Activated CD4-positive, alpha-beta memory T cell treated with anti-CD3 and anti-CD28 coated beads, Interleukin-2, amount 10 ng/mL, durations not matched to agents 7 days and 5 days (primary cell): ENCODE measurements at regions of chr4 and their contacts with region 1.

Region 1: DNA sequence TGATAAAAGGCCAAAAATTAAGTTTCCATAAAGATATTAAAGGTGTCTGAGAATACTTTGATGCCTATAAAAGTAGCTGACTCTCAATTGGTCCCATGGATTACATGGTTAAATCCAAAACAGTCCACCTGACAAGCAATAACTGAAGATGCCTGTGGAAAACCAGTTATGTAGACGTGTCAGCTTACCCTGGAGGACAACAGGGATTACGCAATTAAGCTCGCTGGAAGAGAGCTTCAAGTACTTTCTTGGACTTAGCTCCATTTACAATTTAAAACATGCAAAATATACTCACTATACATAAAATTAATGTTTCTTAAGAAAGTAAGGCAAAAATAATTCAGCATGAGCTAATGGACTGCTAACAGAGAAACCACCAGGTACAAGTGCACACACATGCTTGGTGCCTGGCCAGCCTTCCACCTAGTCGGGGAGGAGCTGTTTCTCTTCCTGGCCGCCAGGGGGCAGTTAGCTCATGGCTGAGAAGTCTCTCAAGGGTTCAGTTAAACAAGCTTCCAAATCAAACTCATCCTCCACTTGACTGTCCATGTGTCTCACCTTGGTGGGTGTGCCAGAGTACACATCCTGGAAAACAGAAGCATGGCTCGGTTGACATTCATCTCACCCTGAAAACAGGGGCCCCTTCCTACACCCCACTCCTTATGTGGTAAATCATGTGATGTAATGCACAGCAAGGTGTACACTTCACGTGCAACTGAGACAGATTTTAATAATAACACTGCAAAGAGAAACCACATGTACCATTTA is 9.2 kb upstream of the FAM53A start:
- DNase-seq: peak; percentile 80
- H3K4me3 Mint-ChIP-seq: no peak overlapping the region
- H3K27ac Mint-ChIP-seq: peak overlapping the region; percentile 73
- H3K4me1 Mint-ChIP-seq: peaks cover 7% of the 10 kb centered on the region
- H3K27me3 Mint-ChIP-seq: no peaks in the 10 kb centered on the region

Region 2: DNA sequence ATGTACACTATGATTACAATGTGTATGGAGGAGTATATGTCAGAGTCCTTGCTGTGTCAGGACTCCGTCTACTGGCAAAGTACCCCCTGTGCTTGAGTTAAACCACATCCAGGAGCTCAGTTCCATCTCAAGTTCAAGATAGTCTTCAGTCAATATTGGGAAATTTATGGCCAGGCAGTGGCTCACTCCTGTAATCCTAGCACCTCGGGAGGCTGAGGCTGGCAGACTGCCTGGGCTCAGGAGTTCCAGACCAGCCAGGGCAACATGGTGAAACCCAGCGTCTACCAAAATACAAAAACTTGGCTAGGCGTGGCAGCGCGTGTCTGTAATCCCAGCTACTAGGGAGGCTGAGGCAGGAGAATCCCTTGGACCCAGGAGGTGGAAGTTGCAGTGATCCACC is 13.0 kb after region 1 on chr4:
- CTCF ChIA-PET with region 1: interaction called, 78 read pairs
- POLR2A ChIA-PET with region 1: interaction called, 108 read pairs
- DNase-seq: no peak
- H3K4me3 Mint-ChIP-seq: no peak overlapping the region
- H3K27ac Mint-ChIP-seq: no peak overlapping the region
- H3K4me1 Mint-ChIP-seq: peaks cover 79% of the 10 kb centered on the region
- H3K27me3 Mint-ChIP-seq: no peaks in the 10 kb centered on the region

Region 3: DNA sequence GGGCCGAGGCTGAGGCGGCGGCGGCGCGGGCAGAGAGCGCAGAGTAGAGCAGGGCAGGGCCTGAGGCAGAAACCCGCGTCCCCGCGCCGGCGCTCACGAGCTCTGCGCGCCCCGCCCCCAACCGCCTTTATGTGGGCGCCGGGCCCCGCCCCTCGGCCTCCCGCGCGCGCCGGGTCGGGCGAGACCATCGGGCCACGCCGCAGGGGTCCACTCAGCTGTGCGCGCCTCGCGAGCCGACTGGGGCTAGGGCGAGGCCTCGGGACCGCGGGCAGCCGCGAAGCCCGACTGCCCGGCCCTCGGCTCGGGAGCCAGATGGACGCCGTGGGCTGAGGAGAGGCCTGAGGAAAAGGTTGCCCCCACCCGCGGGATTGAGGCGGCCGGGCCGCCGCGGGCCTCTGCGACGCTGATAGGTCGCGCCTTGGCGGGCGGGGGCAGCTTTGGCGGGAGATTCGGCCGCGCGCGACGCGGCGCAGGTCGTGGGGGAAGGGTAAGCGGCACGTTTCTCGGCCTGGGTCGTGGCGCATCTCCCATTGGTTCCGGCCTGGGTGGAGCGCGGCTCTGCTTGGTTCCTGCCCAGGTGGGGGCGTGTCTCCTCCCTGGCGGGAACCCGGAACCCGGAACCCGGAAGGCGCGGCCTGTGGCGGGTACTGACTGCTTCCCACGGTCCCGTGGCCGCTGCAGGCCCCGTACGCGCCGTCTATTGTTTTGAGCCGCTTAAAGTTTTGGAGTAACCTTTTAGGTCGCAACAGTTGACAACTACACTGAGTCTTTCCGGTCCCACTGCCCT is 19.1 kb after region 1 on chr4 and contains the start of gene SLBP:
- CTCF ChIA-PET with region 1: interaction called, 78 read pairs
- POLR2A ChIA-PET with region 1: interaction called, 108 read pairs
- DNase-seq: peak; percentile 99
- H3K4me3 Mint-ChIP-seq: peak within 1 kb of the TSS; percentile 99
- H3K27ac Mint-ChIP-seq: peak within 1 kb of the TSS; percentile 96
- H3K4me1 Mint-ChIP-seq: peaks cover 67% of the 10 kb centered on the region
- H3K27me3 Mint-ChIP-seq: no peaks in the 10 kb centered on the region
- total RNA-seq, gene SLBP: 105 to 107 TPM

Region 4: GRCh38 chr4:1721004-1721665 is 27.8 kb after region 1 on chr4 and contains the starts of genes TACC3 and TMEM129:
- CTCF ChIA-PET with region 1: interaction called, 122 read pairs
- POLR2A ChIA-PET with region 1: interaction called, 22 read pairs
- DNase-seq: peak; percentile 96
- H3K4me3 Mint-ChIP-seq: peak within 1 kb of the TSS; percentile 98
- H3K27ac Mint-ChIP-seq: peak within 1 kb of the TSS; percentile 99
- H3K4me1 Mint-ChIP-seq: peaks cover 58% of the 10 kb centered on the region
- H3K27me3 Mint-ChIP-seq: no peaks in the 10 kb centered on the region
- total RNA-seq, gene TACC3: 213 TPM
- total RNA-seq, gene TMEM129: 20.4 to 22.3 TPM

Region 5: GRCh38 chr4:1726146-1726934 is 33.0 kb after region 1 on chr4:
- CTCF ChIA-PET with region 1: interaction called, 122 read pairs
- POLR2A ChIA-PET with region 1: interaction called, 22 read pairs
- DNase-seq: peak; percentile 90
- H3K4me3 Mint-ChIP-seq: no peak overlapping the region
- H3K27ac Mint-ChIP-seq: peak overlapping the region; percentile 59
- H3K4me1 Mint-ChIP-seq: peaks cover 77% of the 10 kb centered on the region
- H3K27me3 Mint-ChIP-seq: no peaks in the 10 kb centered on the region